ENCODE measurements at regions of chr1 and their contacts with region 1.

Region 1: GRCh38 chr1:109910123-109910962 is at the start of gene CSF1:
- DNase-seq: peak; percentile 69
- H3K4me3 ChIP-seq: peak within 1 kb of the TSS; percentile 63 to 66
- H3K27ac ChIP-seq: peak within 1 kb of the TSS; percentile 80 to 84
- H3K4me1 ChIP-seq: no peaks in the 10 kb centered on the region
- H3K27me3 ChIP-seq: no peaks in the 10 kb centered on the region
- CTCF ChIP-seq: no peak
- POLR2A ChIP-seq: peak; percentile 25
- total RNA-seq, gene CSF1: 18.4 to 31.5 TPM

Region 2: DNA sequence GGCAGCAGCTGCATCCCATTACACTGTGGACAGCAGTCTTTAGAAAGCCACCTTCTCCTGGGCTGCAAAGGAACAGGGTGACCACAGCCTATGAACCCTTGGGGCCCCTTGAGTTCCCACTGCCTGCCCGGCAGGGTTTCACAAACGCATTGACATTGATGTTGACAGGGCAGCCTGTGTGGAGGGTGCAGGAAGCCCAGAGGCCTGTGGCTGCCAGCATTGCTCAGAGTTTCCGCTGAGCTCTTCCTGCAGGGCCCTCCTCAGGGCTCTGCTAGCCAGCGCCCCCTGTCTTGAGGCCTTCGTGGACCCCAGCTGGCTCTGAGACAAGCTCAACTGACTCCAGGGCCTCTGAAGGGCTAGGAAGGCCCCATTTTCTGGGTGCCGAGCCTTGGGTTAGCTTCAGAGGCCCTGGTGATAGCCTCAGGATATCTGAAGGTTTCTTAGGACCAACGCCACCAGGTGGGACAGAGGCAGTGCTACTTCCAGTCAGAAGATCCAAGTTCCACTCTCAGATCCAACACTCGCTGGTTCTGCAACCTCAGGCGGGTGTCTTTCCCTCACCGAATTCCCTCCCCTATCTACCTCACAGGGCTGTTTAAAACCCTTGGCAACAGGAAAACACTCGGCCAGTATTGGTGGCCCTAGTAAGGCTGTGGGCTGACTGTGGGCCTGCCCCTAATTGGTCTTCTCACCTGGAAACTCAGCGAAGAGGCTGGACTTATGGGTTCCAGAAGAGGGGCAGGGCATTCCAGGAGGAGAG is 119.4 kb before region 1 on chr1:
- intact Hi-C with region 1: loop called (anchors 5 kb)
- DNase-seq: no peak
- H3K4me3 ChIP-seq: no peak overlapping the region
- H3K27ac ChIP-seq: no peak overlapping the region
- H3K4me1 ChIP-seq: no peaks in the 10 kb centered on the region
- H3K27me3 ChIP-seq: no peaks in the 10 kb centered on the region
- CTCF ChIP-seq: peak in 2 of 4 experiments; percentile 17 to 26
- POLR2A ChIP-seq: no peak

Region 3: GRCh38 chr1:109877320-109877771 is 33.0 kb before region 1 on chr1:
- intact Hi-C with region 1: loop called (anchors 5 kb)
- DNase-seq: no peak
- H3K4me3 ChIP-seq: no peak overlapping the region
- H3K27ac ChIP-seq: peak overlapping the region; percentile 59 to 71
- H3K4me1 ChIP-seq: peaks cover 9% of the 10 kb centered on the region
- H3K27me3 ChIP-seq: no peaks in the 10 kb centered on the region
- CTCF ChIP-seq: peak in 1 of 4 experiments; percentile 22
- POLR2A ChIP-seq: no peak

Region 4: DNA sequence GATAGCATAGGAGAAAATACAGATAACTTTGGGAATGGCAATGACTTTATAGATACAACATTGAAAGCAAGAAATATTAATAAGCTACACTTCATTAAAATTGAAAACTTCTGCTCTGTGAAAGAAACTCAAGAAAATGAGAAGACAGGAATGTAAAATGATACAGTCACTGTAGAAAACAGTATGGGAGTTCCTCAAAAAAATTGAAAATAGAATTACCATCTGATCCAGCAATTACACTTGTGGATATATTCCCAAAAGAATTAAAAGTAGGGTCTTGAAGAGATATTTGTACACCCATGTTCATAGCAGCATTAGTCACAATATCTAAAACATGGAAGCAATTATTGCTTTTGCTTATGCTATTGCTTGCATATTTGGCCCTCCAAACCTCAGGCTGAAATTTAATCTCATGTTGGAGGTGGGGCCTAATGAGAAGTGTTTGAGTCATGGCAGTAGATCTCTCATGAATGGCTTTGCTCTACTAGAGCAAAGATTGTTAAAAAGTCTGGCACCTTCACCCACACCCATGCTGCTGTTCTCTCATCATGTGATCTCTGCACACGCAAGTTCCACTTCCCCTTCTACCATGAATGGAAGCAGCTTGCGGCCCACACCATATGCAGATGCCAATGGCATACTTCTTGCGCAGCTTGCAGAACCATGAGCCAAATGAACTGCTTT is 58.9 kb after region 1 on chr1:
- intact Hi-C with region 1: no loop called
- DNase-seq: no peak
- H3K4me3 ChIP-seq: no peak overlapping the region
- H3K27ac ChIP-seq: no peak overlapping the region
- H3K4me1 ChIP-seq: no peaks in the 10 kb centered on the region
- H3K27me3 ChIP-seq: no peaks in the 10 kb centered on the region
- CTCF ChIP-seq: no peak
- POLR2A ChIP-seq: no peak